ENCODE measurements at regions of chr12 and their contacts with region 1.

Region 1: DNA sequence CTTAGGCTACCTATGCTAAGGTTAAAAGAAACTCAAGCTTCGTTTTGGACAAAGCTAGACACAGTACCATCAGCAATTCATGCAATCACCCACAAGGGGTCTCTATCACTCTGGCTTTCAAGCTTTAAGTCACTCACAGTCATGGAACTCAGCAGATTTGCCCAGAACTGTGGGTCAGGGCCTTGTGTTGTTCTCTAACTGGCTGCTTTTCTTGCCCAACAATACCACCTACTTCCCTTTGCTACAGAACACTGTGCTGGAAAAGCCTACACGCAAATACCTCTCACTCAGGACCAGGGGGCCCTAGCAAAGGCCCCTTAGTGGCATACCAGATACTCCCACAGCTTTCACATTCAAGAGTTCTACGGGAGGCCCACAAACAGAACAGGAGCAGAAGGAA is 9.1 kb downstream of the NEMP1 start:
- DNase-seq: peak in 1 of 2 donors; percentile 76
- ATAC-seq: peak; percentile 85 to 96 (median 94)
- H3K4me3 ChIP-seq: no peak overlapping the region
- H3K27ac ChIP-seq: peak overlapping the region in 9 of 10 donors; percentile 20 to 65 (median 50)
- H3K4me1 ChIP-seq: peaks cover 0 to 26% (median 6%) of the 10 kb centered on the region in 9 donors
- H3K27me3 ChIP-seq: no peaks in the 10 kb centered on the region
- CTCF ChIP-seq: peak; percentile 76 to 94 (median 86)

Region 2: DNA sequence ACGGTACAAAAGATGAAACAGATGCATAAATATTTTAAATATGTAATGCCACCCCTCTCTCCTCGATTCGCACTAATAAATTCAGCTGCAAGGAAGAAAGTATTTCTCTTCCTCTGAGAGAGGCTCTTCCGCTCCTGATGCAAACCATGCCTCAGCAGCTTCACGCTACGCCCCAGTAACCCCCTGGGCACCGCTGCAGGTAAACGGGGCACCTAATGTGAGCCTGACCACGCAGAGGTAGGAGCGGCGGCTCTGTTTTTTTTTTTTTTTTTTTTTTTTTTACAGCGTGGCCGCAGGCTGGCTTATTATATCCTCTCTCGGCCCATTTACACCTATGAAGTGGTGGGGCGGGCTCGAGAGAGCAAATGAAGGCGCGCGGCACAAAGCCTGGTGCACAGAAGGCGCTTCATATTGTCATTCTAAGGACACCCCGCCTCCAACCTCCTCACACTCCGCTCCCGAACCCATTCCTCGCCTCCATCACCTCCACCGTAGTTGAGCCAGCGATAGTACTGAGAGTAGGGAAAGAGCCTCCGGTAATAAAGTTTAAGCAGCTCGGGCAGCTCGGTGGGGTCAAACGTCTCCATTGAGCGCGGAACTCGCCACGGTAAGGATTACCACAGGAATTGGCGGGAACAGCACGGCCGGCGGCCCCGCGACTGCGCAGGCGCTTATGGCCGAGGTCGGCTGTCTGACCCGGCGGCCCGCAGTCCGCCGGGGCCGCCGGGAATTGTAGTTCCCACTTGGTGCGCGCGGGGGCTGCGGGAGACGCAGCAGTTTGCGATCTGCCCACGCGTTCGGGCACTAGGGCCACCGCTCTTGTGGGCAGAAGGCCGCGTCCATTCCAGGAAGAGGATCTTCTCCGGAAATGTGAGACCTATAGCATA is 317.6 kb before region 1 on chr12 and contains the start of gene PRIM1:
- intact Hi-C with region 1: loop called in 4 of 10 experiments (anchors 5 to 10 kb)
- DNase-seq: peak; percentile 76 to 88
- ATAC-seq: peak; percentile 95 to 98 (median 98)
- H3K4me3 ChIP-seq: peak within 1 kb of the TSS; percentile 63 to 80 (median 72)
- H3K27ac ChIP-seq: peak within 1 kb of the TSS in 9 of 10 donors; percentile 22 to 66 (median 43)
- H3K4me1 ChIP-seq: peaks cover 0 to 33% (median 9%) of the 10 kb centered on the region in 9 donors
- H3K27me3 ChIP-seq: no peaks in the 10 kb centered on the region
- CTCF ChIP-seq: peak in 4 of 9 donors; percentile 24 to 44 (median 28)
- total RNA-seq, gene PRIM1: 1.8 to 4.7 (median 3.2) TPM

Region 3: DNA sequence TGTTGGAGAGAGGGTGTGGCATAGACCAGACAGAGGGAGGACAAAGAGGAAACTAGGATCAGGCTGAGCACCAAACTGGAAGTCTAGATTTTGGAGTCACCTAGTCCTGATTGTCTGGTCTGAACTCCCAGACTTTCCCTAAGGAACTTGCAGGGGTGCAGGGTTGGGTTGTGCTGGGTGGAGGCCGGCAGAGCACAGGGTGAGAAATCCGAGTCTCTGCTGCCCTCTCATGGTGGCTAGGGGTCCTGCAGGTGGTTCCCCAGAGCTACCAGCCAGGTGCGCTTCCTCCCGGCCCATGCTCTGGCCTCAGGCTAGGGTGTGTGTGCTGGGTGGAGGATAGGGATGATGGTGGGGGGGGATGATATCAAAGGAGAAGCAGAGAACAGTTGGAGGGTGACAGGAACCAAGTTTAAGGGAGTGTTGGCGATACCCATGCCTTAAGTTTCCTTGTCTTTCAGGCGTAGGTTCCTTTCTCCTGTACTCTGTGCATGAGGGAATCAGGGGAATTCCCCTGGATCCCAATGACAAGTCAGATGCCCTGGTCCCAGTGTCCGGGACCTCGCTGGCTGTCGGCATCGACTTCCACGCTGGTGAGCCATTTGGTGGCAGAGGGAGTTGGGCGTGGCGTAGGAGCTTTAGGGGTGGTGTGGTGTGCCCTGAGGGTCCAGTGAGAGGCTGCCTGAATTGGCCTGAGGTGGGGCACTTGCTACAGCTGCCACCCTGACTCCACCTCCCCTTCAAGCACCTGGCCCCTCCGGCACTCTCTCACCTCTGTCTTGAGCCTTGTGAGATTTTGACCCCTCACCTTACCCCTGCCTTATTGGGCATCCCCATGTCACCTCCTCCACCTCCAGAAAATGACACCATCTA is 113.6 kb after region 1 on chr12:
- intact Hi-C with region 1: loop called in 8 of 10 experiments (anchors 2 to 10 kb)
- DNase-seq: peak; percentile 64 to 75
- ATAC-seq: peak; percentile 61 to 84 (median 78)
- H3K4me3 ChIP-seq: no peak overlapping the region
- H3K27ac ChIP-seq: no peak overlapping the region
- H3K4me1 ChIP-seq: peaks cover 0 to 4% (median 0%) of the 10 kb centered on the region in 9 donors
- H3K27me3 ChIP-seq: no peaks in the 10 kb centered on the region
- CTCF ChIP-seq: peak; percentile 61 to 94 (median 87)

Measured in heart right ventricle (tissue), 16 donors.